ENCODE measurements at regions of chr16 and their contacts with region 1.

Region 1: DNA sequence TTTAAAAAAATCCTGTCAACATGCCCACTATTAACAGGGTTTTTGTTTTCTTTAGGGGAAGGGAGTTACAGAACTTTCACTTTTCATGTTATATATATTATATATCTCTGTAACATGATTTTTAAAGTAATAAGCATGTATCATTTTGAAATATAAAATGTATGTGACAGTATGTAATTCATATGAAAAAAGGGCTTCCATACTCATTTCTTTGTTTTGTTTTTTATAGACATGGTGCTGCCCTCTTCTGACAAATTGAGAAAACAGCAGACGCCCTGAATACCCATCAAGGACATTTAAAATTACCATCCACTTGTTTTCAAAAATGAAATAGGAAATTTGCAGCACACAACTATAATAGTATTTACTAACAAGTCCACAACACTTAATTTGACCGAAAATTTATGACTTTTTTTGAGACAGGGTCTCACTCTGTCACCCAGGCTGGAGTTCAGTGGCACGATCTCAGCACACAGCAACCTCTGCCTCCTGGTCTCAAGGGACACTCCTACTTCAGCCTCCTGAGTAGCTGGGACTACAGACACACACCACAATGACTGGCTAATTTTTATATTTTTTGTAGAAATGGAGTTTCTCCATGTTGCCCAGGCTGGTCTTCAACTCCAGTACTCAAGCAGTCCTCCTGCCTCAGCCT is 30.4 kb downstream of the CFDP1 start:
- DNase-seq: peak; percentile 47
- H3K4me3 Mint-ChIP-seq: no peak overlapping the region
- H3K27ac Mint-ChIP-seq: no peak overlapping the region
- H3K4me1 Mint-ChIP-seq: peaks cover 5% of the 10 kb centered on the region
- H3K27me3 Mint-ChIP-seq: no peaks in the 10 kb centered on the region
- CTCF ChIP-seq: peak; percentile 56

Region 2: GRCh38 chr16:75385507-75386152 is 17.3 kb before region 1 on chr16:
- CTCF ChIA-PET with region 1: interaction called, 22 read pairs
- POLR2A ChIA-PET with region 1: no interaction called
- intact Hi-C with region 1: loop called (anchors 1 kb)
- DNase-seq: peak; percentile 85
- H3K4me3 Mint-ChIP-seq: no peak overlapping the region
- H3K27ac Mint-ChIP-seq: no peak overlapping the region
- H3K4me1 Mint-ChIP-seq: peaks cover 12% of the 10 kb centered on the region
- H3K27me3 Mint-ChIP-seq: no peaks in the 10 kb centered on the region
- CTCF ChIP-seq: peak; percentile 66

Region 3: DNA sequence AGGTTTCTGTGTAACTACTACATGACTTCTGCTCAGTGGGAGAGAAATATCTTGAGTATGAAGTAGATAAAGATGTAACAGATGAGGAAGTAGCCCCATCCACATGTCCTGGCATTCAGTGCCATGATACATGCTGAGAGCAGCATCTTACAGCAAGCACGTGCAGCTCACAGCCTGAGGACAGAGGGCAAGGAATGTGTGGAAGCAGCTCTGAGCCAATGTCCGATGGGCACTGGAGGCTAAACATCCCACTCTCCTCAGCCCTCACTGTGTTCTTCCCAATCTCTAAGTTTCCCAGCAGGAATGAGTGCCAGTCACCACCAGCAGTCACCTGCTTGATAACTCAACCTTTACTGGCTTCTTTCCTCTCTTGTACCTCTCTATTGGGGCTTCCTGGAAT is 10.0 kb before region 1 on chr16:
- CTCF ChIA-PET with region 1: interaction called, 22 read pairs
- POLR2A ChIA-PET with region 1: no interaction called
- intact Hi-C with region 1: no loop called
- DNase-seq: no peak
- H3K4me3 Mint-ChIP-seq: no peak overlapping the region
- H3K27ac Mint-ChIP-seq: no peak overlapping the region
- H3K4me1 Mint-ChIP-seq: peaks cover 6% of the 10 kb centered on the region
- H3K27me3 Mint-ChIP-seq: no peaks in the 10 kb centered on the region
- CTCF ChIP-seq: no peak

Region 4: DNA sequence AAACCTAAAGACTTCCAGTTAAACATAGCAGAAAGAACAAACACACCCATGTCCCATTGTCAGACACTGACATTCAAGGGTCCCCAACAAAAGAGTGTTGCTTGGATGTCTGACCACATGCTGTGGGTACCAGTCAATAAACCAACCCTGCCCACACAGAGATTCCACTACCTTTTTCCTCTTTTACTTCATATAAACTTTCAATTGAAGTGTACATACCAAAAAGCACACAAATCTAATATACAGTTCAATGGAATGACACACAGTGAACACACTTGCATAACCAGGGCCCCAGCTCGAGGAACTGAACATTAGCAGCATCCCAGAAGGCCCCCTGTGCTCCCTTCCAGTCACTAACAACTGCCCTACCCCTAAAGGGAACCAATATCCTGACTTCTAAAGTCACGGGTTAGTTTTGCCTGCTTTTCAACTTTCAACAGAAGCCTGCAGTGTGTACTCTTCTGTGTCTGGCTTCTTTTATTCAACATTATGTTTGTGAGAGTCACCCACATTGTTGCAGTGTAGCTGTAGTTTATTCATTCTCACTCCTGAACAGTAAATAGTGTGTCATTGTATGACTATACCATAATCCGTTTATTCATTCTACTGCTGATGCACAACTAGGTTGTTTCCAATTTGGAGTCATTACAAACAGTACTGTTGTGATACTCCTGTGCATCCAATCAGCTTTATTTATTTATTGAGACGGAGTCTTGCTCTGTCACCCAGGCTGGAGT is 12.4 kb after region 1 on chr16:
- CTCF ChIA-PET with region 1: interaction called, 10 read pairs
- POLR2A ChIA-PET with region 1: interaction called, 3 read pairs
- intact Hi-C with region 1: no loop called
- DNase-seq: no peak
- H3K4me3 Mint-ChIP-seq: no peak overlapping the region
- H3K27ac Mint-ChIP-seq: no peak overlapping the region
- H3K4me1 Mint-ChIP-seq: peaks cover 8% of the 10 kb centered on the region
- H3K27me3 Mint-ChIP-seq: no peaks in the 10 kb centered on the region
- CTCF ChIP-seq: no peak

Region 5: DNA sequence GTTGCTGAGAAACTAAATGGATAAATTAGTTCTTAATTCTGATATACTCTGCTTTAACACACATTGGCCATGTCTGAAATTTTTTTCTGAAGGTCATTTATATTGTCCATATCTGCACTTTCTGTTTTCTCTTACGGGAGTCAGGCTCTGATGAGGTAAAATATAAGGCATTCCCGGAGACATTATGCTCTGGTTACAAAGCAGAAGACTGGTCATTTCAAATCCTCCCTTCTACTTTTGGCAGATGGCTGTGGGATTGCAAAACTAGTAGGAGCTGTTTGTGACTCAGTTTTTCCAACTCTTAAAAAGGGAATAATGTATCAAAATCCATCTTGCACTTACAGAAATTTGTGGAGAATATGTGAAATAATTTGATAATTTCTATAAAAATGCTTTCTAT is 415.5 kb after region 1 on chr16:
- CTCF ChIA-PET with region 1: no interaction called
- POLR2A ChIA-PET with region 1: no interaction called
- intact Hi-C with region 1: no loop called
- DNase-seq: peak; percentile 63
- H3K4me3 Mint-ChIP-seq: no peak overlapping the region
- H3K27ac Mint-ChIP-seq: no peak overlapping the region
- H3K4me1 Mint-ChIP-seq: peaks cover 20% of the 10 kb centered on the region
- H3K27me3 Mint-ChIP-seq: no peaks in the 10 kb centered on the region
- CTCF ChIP-seq: no peak

Measured in MCF 10A (cell line).